ENCODE measurements at regions of chr3 and their contacts with region 1.

Region 1: GRCh38 chr3:129490242-129491045 is 38.0 kb upstream of the RHO start:
- DNase-seq: peak; percentile 83 to 89
- ATAC-seq: peak; percentile 89 to 93
- H3K4me3 ChIP-seq: no peak overlapping the region
- H3K27ac ChIP-seq: peak overlapping the region; percentile 89 to 92
- H3K4me1 ChIP-seq: peaks cover 22% of the 10 kb centered on the region
- CTCF ChIP-seq: peak; percentile 87
- EP300 ChIP-seq: no peak
- POLR2A ChIP-seq: no peak
- RAD21 ChIP-seq: peak; percentile 93 to 95

Region 2: DNA sequence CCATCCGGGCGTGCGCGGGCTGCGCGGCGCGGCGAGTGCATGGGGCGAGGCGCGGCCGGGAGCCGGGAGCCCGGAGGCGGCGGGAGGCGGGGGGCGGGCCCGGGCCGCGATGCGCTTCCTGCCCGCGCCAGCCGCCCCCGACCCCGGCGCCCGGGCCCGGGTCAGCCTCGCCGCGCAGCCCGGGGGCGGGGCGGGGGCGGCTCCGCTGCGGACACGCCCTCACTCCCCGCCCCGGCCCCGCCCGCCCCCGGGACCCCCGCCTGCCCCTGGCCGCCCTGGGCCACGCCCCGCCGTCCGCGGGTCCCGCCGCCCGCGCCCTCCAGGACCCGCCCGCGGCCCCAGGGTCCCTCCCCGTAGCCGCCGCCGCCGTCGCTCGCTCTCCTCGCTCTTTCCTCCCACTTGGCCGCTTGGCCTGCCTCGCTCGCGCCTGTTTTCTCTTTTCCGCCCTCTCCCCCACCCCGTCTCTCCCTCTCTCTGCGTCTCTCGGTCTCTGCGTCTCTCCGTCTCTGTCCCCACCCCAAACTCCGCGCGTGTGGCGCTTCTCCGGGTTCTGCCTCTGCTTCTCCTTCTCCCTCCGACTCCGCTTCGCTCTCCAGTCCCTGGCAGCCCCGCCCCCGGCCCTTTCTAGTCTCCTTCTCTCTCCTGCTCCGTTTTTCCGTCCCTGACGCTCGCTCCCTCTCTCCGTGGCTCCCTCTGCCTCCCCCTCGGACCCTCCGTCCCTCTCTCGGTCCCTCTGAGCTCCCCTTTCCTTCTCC is 116.4 kb after region 1 on chr3 and contains the start of gene PLXND1:
- CTCF ChIA-PET with region 1: interaction called, 13 read pairs
- POLR2A ChIA-PET with region 1: no interaction called
- DNase-seq: peak; percentile 53 to 57
- ATAC-seq: peak; percentile 35 to 61
- H3K4me3 ChIP-seq: peak within 1 kb of the TSS; percentile 89
- H3K27ac ChIP-seq: peak within 1 kb of the TSS; percentile 96 to 97
- H3K4me1 ChIP-seq: peaks cover 63% of the 10 kb centered on the region
- CTCF ChIP-seq: no peak
- EP300 ChIP-seq: no peak
- POLR2A ChIP-seq: peak; percentile 27
- RAD21 ChIP-seq: no peak
- polyA plus RNA-seq, gene PLXND1: 26.8 and 49.3 TPM in 2 replicates

Region 3: GRCh38 chr3:129650256-129650872 is 159.9 kb after region 1 on chr3:
- CTCF ChIA-PET with region 1: interaction called, 13 read pairs
- POLR2A ChIA-PET with region 1: no interaction called
- DNase-seq: peak; percentile 18 to 75
- ATAC-seq: peak; percentile 53 to 64; a peak in 4 of 6 replicates
- H3K4me3 ChIP-seq: no peak overlapping the region
- H3K27ac ChIP-seq: peak overlapping the region; percentile 93
- H3K4me1 ChIP-seq: peaks cover 64% of the 10 kb centered on the region
- CTCF ChIP-seq: peak; percentile 69
- EP300 ChIP-seq: no peak
- POLR2A ChIP-seq: no peak
- RAD21 ChIP-seq: peak; percentile 80 to 82

Region 4: DNA sequence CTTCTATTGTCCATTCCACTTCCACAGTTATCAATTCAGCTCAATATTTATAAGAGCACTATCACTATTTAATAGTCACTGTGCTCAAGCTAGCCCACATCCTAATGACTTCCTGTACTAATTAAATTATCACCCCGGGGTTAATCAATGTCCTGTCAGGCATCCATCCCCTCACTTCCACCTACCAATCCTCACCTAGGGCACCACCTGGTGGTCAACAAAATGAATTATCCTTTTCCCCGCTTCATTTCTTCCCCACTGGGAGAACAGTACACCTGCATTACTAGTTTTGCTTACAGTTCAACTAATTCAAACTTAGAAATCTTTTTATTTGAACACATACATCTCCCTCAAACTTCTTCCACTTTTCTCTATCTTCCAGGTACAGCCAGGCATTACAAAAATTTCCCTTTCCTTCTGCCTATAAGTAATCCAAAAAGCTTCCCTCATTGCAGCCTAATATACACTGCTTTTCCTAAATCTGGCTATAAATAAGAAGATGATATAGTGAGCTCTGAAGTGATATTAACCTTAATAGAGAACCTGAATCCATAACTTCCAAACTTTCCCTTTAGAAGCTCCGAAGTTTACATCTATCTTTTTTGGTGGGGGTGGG is 334.6 kb after region 1 on chr3:
- CTCF ChIA-PET with region 1: interaction called, 16 read pairs
- POLR2A ChIA-PET with region 1: interaction called, 5 read pairs
- DNase-seq: peak; percentile 32 to 69
- ATAC-seq: peak in 1 of 2 experiments; percentile 78; a peak in 3 of 6 replicates
- H3K4me3 ChIP-seq: no peak overlapping the region
- H3K27ac ChIP-seq: peak overlapping the region; percentile 23 to 42; a peak in 3 of 6 replicates
- H3K4me1 ChIP-seq: peaks cover 54% of the 10 kb centered on the region
- CTCF ChIP-seq: peak; percentile 81
- EP300 ChIP-seq: no peak
- POLR2A ChIP-seq: no peak
- RAD21 ChIP-seq: peak; percentile 86 to 87

Region 5: DNA sequence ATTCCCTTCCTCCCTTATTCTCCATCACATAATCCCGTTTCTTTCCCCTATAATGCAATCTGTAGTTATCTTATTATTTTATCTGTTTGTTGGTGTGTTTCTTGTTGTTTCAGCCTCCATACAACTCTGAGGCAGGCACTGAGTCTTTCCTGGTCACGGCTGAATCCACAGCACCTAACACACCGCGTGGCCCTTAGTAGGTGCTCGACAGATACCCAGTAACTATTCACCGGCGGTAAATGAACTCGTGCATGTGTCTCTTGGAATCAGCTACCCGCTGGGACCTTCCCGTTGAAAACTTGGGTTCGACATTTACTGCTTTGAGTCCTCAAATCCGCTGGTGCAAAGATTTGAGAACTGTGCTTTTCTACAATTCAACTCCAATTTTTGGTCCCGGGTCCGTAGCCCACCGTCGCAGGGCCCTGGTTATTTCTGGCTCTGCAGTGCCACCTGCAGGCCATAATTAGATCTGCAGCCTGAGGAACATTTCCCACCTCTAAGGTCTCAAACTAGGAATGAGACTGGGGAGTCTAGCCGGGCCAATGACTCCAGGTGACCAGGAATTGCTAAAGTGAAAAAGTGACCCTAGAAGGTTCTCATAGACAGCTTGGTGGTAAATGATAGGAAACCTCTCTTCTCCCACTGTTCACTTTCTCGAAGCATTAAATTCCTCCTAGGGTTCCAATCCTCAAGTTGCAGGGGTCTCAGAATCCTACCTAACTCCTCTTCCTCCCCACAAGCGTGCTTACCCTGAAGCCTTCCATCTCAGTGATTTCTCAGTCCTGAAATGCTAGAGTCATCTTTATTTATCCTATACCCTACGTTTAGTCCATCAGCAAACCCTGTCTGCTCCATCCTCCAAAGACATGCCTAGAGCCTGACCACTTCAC is 444.0 kb after region 1 on chr3:
- CTCF ChIA-PET with region 1: interaction called, 10 read pairs
- POLR2A ChIA-PET with region 1: no interaction called
- DNase-seq: peak; percentile 25 to 40
- ATAC-seq: peak; percentile 67 to 83
- H3K4me3 ChIP-seq: peak overlapping the region; percentile 18; the same call in 1 of the 3 replicates
- H3K27ac ChIP-seq: peak overlapping the region; percentile 62 to 78; a peak in 5 of 6 replicates
- H3K4me1 ChIP-seq: peaks cover 11% of the 10 kb centered on the region; the same call in 1 of the 3 replicates
- CTCF ChIP-seq: peak; percentile 80
- EP300 ChIP-seq: no peak
- POLR2A ChIP-seq: no peak
- RAD21 ChIP-seq: peak; percentile 89